CD14-positive monocyte (primary cell): ENCODE measurements at regions of chr2 and their contacts with region 1.

Region 1: GRCh38 chr2:203014456-203015199 is at the start of gene NBEAL1:
- DNase-seq: peak; percentile 98 to 100 (median 99)
- H3K4me3 ChIP-seq: peak within 1 kb of the TSS; percentile 81 to 98 (median 92)
- H3K4me3 Mint-ChIP-seq: peak within 1 kb of the TSS; percentile 96 to 98
- H3K27ac ChIP-seq: peak within 1 kb of the TSS; percentile 81 to 97
- H3K27ac Mint-ChIP-seq: peak within 1 kb of the TSS; percentile 97 to 99 (median 97)
- H3K4me1 ChIP-seq: peaks cover 15 to 20% of the 10 kb centered on the region in 2 donors
- H3K4me1 Mint-ChIP-seq: peaks cover 24% of the 10 kb centered on the region
- H3K27me3 ChIP-seq: no peaks in the 10 kb centered on the region
- H3K27me3 Mint-ChIP-seq: peaks cover 0 to 3% (median 0%) of the 10 kb centered on the region in 3 donors
- CTCF ChIP-seq: no peak
- polyA plus RNA-seq, gene NBEAL1: 2.5 to 5.3 (median 4.4) TPM

Region 2: GRCh38 chr2:202375609-202376408 is 638.8 kb before region 1 on chr2 and contains the start of gene BMPR2:
- intact Hi-C with region 1: loop called in 1 of 2 experiments (anchors 10 kb)
- DNase-seq: peak; percentile 62 to 77 (median 73)
- H3K4me3 ChIP-seq: peak within 1 kb of the TSS; percentile 87 to 99 (median 93)
- H3K4me3 Mint-ChIP-seq: peak within 1 kb of the TSS; percentile 99 to 100
- H3K27ac ChIP-seq: peak within 1 kb of the TSS; percentile 71 to 77
- H3K27ac Mint-ChIP-seq: peak within 1 kb of the TSS; percentile 82 to 92 (median 88)
- H3K4me1 ChIP-seq: peaks cover 22 to 42% of the 10 kb centered on the region in 2 donors
- H3K4me1 Mint-ChIP-seq: peaks cover 40% of the 10 kb centered on the region
- H3K27me3 ChIP-seq: peaks cover 4 to 24% of the 10 kb centered on the region in 2 donors
- H3K27me3 Mint-ChIP-seq: peaks cover 8 to 40% (median 18%) of the 10 kb centered on the region in 3 donors
- CTCF ChIP-seq: no peak
- polyA plus RNA-seq, gene BMPR2: 4.1 to 6.4 (median 4.8) TPM

Region 3: DNA sequence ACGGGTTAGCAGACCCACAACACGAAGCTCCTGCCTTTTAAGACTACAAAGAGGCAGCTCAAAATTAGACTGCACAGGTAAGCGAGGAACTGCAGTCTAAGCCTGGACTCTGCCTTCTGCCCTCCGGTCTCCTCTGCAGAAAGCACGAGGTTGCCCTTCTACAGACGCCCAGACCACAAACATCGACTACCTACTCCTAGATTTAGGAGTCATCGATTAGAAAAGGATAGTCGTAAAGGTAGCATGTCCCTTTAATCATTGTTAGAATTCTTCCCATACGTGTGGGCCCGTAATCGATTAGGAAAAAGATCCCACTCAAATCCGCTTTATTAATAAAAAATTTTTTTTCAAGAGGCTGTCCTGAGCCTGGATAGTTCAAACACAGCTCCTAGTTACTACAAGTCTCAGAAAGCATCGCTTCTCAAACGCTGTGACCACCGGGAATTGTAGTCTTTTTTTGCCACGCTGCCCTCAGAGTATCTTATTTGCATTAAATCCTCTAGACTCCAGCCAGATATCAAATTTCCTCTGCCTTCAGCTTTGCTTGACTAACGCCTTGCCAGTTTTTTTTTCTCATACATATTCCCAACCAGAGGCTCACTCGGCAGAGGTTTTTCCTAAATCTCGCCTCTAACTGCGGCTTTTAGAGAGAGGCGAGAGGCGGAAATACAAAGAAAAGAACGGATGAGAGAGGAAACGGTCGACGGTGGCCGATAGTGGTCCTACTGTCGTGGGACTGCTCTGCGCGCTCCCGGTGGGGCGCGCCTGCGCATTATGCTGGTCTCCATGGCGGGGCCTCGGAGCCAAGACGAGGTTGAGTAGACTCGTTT is 102.9 kb before region 1 on chr2 and contains the starts of genes CARF and WDR12:
- intact Hi-C with region 1: loop called (anchors 1 to 5 kb)
- DNase-seq: peak; percentile 87 to 92 (median 89)
- H3K4me3 ChIP-seq: peak within 1 kb of the TSS; percentile 65 to 99 (median 95)
- H3K4me3 Mint-ChIP-seq: peak within 1 kb of the TSS; percentile 97
- H3K27ac ChIP-seq: peak within 1 kb of the TSS; percentile 76 to 81
- H3K27ac Mint-ChIP-seq: peak within 1 kb of the TSS; percentile 91 to 99 (median 97)
- H3K4me1 ChIP-seq: peaks cover 19 to 22% of the 10 kb centered on the region in 2 donors
- H3K4me1 Mint-ChIP-seq: peaks cover 32% of the 10 kb centered on the region
- H3K27me3 ChIP-seq: no peaks in the 10 kb centered on the region
- H3K27me3 Mint-ChIP-seq: no peaks in the 10 kb centered on the region
- CTCF ChIP-seq: no peak
- polyA plus RNA-seq, gene CARF: 1.1 to 4.6 (median 2.8) TPM
- polyA plus RNA-seq, gene WDR12: 4.1 to 14.6 (median 6.5) TPM

Region 4: DNA sequence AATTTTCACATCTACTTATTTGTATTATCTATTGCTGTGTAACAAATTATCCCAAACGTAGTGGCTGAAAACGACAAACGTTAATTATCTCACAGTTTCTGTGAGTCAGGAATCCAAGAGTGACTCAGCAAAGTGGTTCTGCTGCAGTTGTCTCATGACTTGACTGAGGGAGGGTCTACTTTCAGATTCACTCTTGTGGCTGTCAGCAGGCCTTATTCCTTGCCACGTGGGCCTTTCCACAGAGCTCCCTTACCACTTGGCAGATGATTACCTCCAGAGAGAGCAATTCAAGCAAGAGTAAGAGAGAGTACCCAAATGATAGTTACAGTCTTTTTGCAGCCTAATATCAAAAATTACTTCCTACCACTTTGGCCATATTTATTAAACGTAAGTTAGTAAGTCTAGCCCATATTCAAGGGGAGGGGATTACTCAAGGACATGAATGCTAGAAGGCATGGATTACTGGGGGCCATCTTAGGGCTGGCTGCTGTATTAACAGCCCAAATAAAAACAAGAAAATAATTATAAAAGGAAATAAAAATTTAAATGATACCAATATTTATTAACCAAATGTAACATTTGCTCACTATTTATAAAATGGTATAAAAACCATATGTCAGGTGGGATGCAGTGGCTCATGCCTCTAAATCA is 48.7 kb before region 1 on chr2:
- intact Hi-C with region 1: loop called (anchors 5 kb)
- DNase-seq: peak; percentile 62 to 81 (median 65)
- H3K4me3 ChIP-seq: no peak overlapping the region
- H3K4me3 Mint-ChIP-seq: peak overlapping the region in 1 of 2 donors; percentile 48
- H3K27ac ChIP-seq: peak overlapping the region in 1 of 2 donors; percentile 6
- H3K27ac Mint-ChIP-seq: peak overlapping the region in 6 of 7 donors; percentile 35 to 81 (median 70)
- H3K4me1 ChIP-seq: peaks cover 0 to 4% of the 10 kb centered on the region in 2 donors
- H3K4me1 Mint-ChIP-seq: peaks cover 4% of the 10 kb centered on the region
- H3K27me3 ChIP-seq: no peaks in the 10 kb centered on the region
- H3K27me3 Mint-ChIP-seq: peaks cover 0 to 2% (median 0%) of the 10 kb centered on the region in 3 donors
- CTCF ChIP-seq: no peak

Region 5: DNA sequence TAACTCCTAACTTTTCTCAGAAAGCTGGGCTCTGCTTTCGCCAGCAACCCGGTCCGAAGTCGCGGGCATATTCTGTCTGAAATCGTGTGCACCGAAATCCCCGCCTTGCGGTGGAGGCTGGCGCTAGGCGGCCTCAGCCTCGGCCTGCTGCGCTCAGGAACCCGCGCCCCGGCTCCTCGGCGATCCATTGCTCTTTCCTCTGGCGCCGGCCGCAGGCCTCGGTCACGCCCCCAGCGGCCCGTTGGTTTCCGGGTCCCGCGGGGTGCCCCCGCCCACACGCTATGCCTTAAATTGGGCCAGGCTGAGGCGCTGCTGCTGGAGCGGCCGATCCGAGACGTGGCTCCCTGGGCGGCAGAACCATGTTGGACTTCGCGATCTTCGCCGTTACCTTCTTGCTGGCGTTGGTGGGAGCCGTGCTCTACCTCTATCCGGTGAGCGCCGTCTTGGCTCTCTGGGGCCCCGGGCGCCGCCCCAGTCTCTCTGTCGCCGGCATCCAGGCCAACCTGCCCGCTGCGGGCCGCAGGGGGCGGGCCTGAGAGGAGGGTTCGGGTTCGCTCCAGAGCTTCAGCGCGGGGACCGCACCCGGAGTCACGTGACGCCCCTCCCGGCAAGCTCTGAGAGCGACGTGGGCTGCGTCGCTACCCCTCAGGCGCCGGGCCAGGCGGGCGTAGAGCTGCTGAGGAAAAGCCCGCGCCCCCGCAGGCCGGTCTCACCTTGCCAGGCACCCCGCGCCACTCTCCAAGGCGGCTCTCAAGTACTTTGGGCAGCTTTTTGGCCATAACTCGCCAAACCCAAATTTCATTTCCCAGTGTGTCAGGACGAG is 224.3 kb after region 1 on chr2 and contains the start of gene CYP20A1:
- intact Hi-C with region 1: loop called in 1 of 2 experiments (anchors 10 kb)
- DNase-seq: peak; percentile 90 to 95 (median 92)
- H3K4me3 ChIP-seq: peak within 1 kb of the TSS; percentile 71 to 90 (median 80)
- H3K4me3 Mint-ChIP-seq: peak within 1 kb of the TSS; percentile 95 to 98
- H3K27ac ChIP-seq: peak within 1 kb of the TSS; percentile 83 to 92
- H3K27ac Mint-ChIP-seq: peak within 1 kb of the TSS; percentile 92 to 98 (median 96)
- H3K4me1 ChIP-seq: peaks cover 21 to 24% of the 10 kb centered on the region in 2 donors
- H3K4me1 Mint-ChIP-seq: peaks cover 20% of the 10 kb centered on the region
- H3K27me3 ChIP-seq: no peaks in the 10 kb centered on the region
- H3K27me3 Mint-ChIP-seq: peaks cover 0 to 3% (median 0%) of the 10 kb centered on the region in 3 donors
- CTCF ChIP-seq: peak; percentile 10
- polyA plus RNA-seq, gene CYP20A1: 13.3 to 17.6 (median 15.4) TPM